ENCODE measurements at regions of chrX and their contacts with region 1.

Region 1: DNA sequence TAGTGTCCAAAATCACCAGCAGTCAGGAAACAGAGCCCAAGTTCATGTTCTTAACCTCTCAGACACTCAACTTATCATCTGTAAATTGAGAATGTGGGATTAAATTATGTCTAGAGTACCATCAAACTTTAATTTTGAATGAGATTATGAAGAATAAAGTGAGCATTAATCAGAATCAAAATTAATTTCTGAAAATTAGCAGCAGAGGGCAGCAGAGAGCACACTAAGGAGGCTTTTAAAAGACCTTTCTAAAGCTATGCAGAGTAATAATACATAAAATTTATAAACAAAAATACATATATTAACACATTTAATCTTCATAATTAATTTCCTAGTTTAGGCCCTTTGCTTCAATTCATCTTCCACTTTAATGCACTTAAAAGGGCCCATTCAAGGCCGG is 7.1 kb downstream of the TASL start:
- DNase-seq: peak; percentile 44
- H3K4me3 Mint-ChIP-seq: no peak overlapping the region
- H3K27ac Mint-ChIP-seq: no peak overlapping the region
- H3K4me1 Mint-ChIP-seq: no peaks in the 10 kb centered on the region
- H3K27me3 Mint-ChIP-seq: peaks cover 25% of the 10 kb centered on the region
- CTCF ChIP-seq: peak; percentile 37

Region 2: DNA sequence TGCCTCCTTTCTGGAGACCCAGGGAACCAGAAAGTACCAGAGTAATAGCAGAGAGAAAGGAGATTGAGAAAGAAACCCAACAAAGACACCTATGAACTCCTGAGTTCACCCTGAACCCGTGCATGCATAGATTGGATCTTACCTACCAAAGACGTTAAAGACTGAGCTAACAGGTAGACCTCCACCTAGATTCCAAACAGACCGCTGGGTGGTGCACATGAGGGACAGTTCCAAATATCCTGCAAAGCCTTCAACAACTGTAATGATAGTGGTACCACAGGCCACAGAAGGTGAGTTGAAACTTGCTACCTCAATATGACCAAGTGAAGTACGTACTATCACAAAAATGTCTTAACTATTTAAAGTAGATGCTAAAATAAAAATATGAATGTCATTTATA is 227.3 kb before region 1 on chrX:
- CTCF ChIA-PET with region 1: no interaction called
- POLR2A ChIA-PET with region 1: no interaction called
- intact Hi-C with region 1: no loop called
- DNase-seq: peak; percentile 3
- H3K4me3 Mint-ChIP-seq: no peak overlapping the region
- H3K27ac Mint-ChIP-seq: no peak overlapping the region
- H3K4me1 Mint-ChIP-seq: no peaks in the 10 kb centered on the region
- H3K27me3 Mint-ChIP-seq: peaks cover 24% of the 10 kb centered on the region
- CTCF ChIP-seq: no peak

Region 3: DNA sequence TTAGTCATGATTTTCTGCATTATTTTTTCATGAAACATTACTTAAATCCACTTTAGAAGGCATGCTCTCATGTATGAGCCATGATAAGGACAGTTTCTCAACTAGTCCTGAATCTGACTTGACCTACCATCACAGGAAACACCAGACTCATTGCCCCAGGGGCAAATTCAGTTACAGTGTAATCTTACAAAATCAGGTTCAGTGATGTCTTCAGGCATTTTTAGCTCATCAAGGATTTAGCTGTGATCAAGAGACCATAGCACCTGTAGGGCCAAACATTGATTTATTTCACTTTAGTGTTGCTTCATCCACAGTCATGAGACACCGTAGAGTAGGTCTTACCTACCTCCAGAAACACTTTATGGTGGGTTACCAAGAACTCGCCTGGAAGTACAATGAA is 10.1 kb after region 1 on chrX:
- CTCF ChIA-PET with region 1: interaction called, 11 read pairs
- POLR2A ChIA-PET with region 1: no interaction called
- intact Hi-C with region 1: no loop called
- DNase-seq: peak; percentile 18
- H3K4me3 Mint-ChIP-seq: no peak overlapping the region
- H3K27ac Mint-ChIP-seq: no peak overlapping the region
- H3K4me1 Mint-ChIP-seq: no peaks in the 10 kb centered on the region
- H3K27me3 Mint-ChIP-seq: peaks cover under 1% of the 10 kb centered on the region
- CTCF ChIP-seq: no peak

Region 4: GRCh38 chrX:30593435-30594200 is 23.1 kb after region 1 on chrX:
- CTCF ChIA-PET with region 1: interaction called, 15 read pairs
- POLR2A ChIA-PET with region 1: no interaction called
- intact Hi-C with region 1: no loop called
- DNase-seq: peak; percentile 22
- H3K4me3 Mint-ChIP-seq: no peak overlapping the region
- H3K27ac Mint-ChIP-seq: no peak overlapping the region
- H3K4me1 Mint-ChIP-seq: no peaks in the 10 kb centered on the region
- H3K27me3 Mint-ChIP-seq: peaks cover 33% of the 10 kb centered on the region
- CTCF ChIP-seq: no peak

Region 5: DNA sequence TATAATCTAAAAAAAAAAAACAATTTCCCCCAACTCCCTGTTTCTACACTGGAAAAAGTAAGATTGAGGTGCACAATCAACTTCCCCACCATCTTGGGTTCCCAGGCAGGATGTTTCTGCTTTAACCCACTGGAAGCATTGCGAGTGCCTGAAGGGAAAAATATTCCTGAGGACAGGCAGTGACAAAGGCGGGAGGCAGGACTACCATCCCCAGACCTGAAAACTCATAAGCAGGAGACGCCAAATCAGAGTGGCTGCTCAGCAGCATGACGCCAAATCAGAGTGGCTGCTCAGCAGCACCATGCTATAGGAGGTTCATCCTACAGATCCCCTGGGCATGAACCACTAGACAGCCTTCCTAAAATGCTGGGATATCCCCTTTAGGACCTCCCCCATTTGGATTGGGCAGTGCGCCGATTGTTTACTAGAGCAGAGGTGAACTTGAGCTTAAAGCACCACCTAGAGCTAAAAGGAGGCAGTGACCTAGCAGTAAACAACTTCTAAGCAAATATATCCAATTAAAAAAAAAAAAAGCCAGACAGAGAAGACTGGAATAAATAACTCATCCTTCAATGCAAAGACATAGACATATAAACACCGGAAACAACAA is 47.8 kb after region 1 on chrX:
- CTCF ChIA-PET with region 1: interaction called, 3 read pairs
- POLR2A ChIA-PET with region 1: no interaction called
- intact Hi-C with region 1: loop called (anchors 1 kb)
- DNase-seq: no peak
- H3K4me3 Mint-ChIP-seq: no peak overlapping the region
- H3K27ac Mint-ChIP-seq: no peak overlapping the region
- H3K4me1 Mint-ChIP-seq: peaks cover 13% of the 10 kb centered on the region
- H3K27me3 Mint-ChIP-seq: no peaks in the 10 kb centered on the region
- CTCF ChIP-seq: no peak

Region 6: DNA sequence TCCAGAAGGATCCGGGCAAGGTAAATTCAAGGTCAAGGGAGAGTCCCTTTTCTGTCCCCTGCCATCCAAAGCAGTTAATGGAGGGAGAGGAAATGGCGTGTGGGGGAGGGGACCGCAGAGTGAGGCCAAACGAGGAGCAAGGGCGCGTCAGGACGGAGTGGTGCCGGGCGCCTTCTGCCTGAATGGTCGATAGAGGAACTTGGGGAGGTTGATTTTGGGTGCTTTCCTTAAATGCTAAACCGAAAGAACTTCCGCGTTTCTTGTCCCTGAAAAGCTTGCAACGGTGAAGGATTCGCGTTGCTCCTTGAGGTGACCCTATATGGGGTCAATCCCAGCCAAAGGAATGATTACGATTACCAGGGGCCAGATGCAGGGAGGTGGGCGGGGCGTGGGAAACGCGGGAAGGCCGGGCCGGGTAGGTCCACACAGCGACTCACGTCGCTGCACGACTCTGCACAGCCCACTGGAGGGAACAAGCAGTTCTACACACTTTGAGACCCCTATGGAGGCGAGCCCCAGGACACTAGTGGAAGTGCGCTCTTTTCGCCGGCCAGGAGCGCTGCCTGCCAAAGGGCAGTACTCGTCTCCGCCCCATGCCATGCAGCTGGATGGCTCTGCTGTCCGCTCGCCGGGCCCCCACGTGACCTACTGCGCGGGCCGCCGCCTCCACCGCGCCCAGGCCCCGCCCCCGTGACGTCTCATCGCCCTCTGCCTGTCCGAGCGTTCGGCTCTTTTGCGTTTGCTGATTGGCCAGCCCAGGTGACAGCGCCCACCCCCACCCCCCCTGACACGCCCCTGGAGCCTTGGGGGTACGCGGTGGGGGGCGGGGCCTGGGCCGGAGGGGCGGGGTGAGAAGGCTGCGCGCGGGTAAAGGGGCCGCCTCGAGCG is 82.3 kb after region 1 on chrX:
- CTCF ChIA-PET with region 1: interaction called, 3 read pairs
- POLR2A ChIA-PET with region 1: no interaction called
- intact Hi-C with region 1: loop called (anchors 10 kb)
- DNase-seq: peak; percentile 88
- H3K4me3 Mint-ChIP-seq: peak overlapping the region; percentile 55
- H3K27ac Mint-ChIP-seq: peak overlapping the region; percentile 59
- H3K4me1 Mint-ChIP-seq: peaks cover 12% of the 10 kb centered on the region
- H3K27me3 Mint-ChIP-seq: no peaks in the 10 kb centered on the region
- CTCF ChIP-seq: no peak

Region 7: DNA sequence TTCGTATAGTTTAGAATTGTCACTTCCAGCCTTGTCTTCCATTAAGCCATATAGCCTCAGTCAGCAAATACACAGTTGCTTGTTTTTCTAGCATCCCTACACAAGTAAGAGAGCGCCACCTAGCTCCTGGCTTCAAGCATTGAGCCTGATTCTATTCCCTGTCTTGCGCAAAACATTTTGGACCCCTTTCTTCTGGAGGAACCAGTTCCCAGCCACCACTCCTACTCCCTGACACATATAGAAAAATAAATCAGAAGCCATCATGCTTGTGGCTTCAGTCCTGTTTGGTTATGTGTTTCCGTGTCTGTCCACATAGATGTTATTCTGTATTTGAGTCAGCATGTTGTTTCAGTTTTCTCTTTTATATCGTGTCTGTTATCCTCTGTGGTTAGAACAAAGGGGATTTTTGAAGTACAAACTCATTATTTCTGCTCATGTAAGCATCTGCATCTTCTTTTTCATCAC is 142.6 kb after region 1 on chrX:
- CTCF ChIA-PET with region 1: interaction called, 22 read pairs
- POLR2A ChIA-PET with region 1: no interaction called
- intact Hi-C with region 1: loop called (anchors 1 kb)
- DNase-seq: peak; percentile 65
- H3K4me3 Mint-ChIP-seq: no peak overlapping the region
- H3K27ac Mint-ChIP-seq: no peak overlapping the region
- H3K4me1 Mint-ChIP-seq: no peaks in the 10 kb centered on the region
- H3K27me3 Mint-ChIP-seq: peaks cover 28% of the 10 kb centered on the region
- CTCF ChIP-seq: peak; percentile 66

Region 8: DNA sequence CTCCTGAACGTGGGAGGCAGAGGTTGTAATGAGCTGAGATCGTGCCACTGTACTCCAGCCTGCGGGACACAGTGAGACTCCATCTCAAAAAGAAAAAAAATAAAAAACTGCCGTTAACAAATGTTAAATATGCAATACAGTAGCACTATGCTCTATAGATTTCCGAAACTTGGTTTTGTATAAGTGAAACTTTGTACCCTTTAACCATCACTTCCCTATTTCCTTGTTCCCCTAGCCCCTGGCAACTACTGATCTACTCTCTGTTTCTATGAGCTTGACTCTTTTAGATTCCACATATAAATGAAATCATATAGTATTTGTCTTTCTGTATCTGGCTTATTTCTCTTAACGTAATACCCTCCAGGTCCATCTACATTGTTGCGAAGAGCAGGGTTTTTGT is 244.5 kb after region 1 on chrX:
- CTCF ChIA-PET with region 1: no interaction called
- POLR2A ChIA-PET with region 1: no interaction called
- intact Hi-C with region 1: no loop called
- DNase-seq: no peak
- H3K4me3 Mint-ChIP-seq: no peak overlapping the region
- H3K27ac Mint-ChIP-seq: no peak overlapping the region
- H3K4me1 Mint-ChIP-seq: no peaks in the 10 kb centered on the region
- H3K27me3 Mint-ChIP-seq: no peaks in the 10 kb centered on the region
- CTCF ChIP-seq: no peak